Activated CD8-positive, alpha-beta T cell treated with anti-CD3 and anti-CD28 coated beads for 36 hours (primary cell): ENCODE measurements at regions of chr20 and their contacts with region 1.

Region 1: GRCh38 chr20:47181056-47181862 is 175.2 kb downstream of the ZMYND8 start:
- DNase-seq: peak; percentile 47
- ATAC-seq: peak; percentile 95
- H3K4me3 Mint-ChIP-seq: no peak overlapping the region
- H3K27ac Mint-ChIP-seq: no peak overlapping the region
- H3K4me1 Mint-ChIP-seq: no peaks in the 10 kb centered on the region
- H3K27me3 Mint-ChIP-seq: no peaks in the 10 kb centered on the region
- CTCF ChIP-seq: no peak

Region 2: DNA sequence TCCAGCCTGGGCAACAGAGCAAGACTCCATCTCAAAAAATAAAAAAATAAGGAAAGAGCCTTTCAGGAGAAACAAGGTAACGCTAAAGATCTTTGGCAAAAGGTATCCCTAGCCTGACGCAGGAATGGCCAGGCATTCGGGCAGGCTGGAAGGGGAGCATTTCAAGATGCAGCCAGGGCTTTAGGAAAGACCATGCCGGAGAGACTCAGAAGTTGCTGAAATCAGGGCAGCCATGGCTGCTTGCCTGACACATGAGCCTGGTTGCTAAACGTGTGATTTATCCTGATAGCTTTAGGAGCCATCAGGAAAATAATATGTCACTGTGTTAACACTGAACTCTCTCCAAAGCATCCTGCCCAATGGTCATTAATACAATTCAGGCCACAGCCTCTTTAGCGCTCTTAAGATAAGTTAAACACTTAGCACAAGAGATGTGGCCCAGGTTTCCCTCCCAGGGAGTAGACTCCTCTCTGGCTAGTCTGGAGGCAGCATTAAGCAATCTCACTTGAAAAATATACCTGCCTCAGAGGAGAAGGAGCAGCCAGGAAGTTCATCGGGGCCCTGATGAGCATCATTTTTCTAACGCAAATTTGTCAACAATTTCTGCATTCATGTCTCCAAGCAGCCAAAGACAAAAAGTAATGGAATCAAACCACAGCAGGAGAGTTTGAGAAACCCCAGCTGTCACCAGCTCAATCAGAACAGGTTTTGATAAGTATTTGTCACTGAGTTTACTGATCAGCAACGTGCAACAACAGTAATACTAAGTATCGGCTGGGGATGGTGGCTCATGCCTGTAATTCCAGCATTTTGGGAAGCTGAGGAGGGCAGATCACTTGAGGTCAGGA is 24.7 kb before region 1 on chr20:
- CTCF ChIA-PET with region 1: no interaction called
- POLR2A ChIA-PET with region 1: no interaction called
- intact Hi-C with region 1: no loop called
- DNase-seq: no peak
- ATAC-seq: no peak
- H3K4me3 Mint-ChIP-seq: no peak overlapping the region
- H3K27ac Mint-ChIP-seq: no peak overlapping the region
- H3K4me1 Mint-ChIP-seq: no peaks in the 10 kb centered on the region
- H3K27me3 Mint-ChIP-seq: peaks cover 3% of the 10 kb centered on the region
- CTCF ChIP-seq: no peak

Region 3: GRCh38 chr20:47196091-47197081 is 15.1 kb after region 1 on chr20:
- CTCF ChIA-PET with region 1: interaction called, 11 read pairs
- POLR2A ChIA-PET with region 1: no interaction called
- intact Hi-C with region 1: no loop called
- DNase-seq: peak; percentile 85
- ATAC-seq: peak; percentile 77
- H3K4me3 Mint-ChIP-seq: no peak overlapping the region
- H3K27ac Mint-ChIP-seq: no peak overlapping the region
- H3K4me1 Mint-ChIP-seq: peaks cover 14% of the 10 kb centered on the region
- H3K27me3 Mint-ChIP-seq: peaks cover 4% of the 10 kb centered on the region
- CTCF ChIP-seq: peak; percentile 91

Region 4: GRCh38 chr20:47231382-47232039 is 50.3 kb after region 1 on chr20:
- CTCF ChIA-PET with region 1: no interaction called
- POLR2A ChIA-PET with region 1: no interaction called
- intact Hi-C with region 1: no loop called
- DNase-seq: no peak
- ATAC-seq: no peak
- H3K4me3 Mint-ChIP-seq: no peak overlapping the region
- H3K27ac Mint-ChIP-seq: no peak overlapping the region
- H3K4me1 Mint-ChIP-seq: peaks cover 2% of the 10 kb centered on the region
- H3K27me3 Mint-ChIP-seq: no peaks in the 10 kb centered on the region
- CTCF ChIP-seq: no peak